A673 (cell line): ENCODE measurements at regions of chr6 and their contacts with region 1.

Region 1: GRCh38 chr6:130282234-130282995 is 59.7 kb upstream of the SAMD3 start:
- DNase-seq: peak; percentile 69
- H3K4me3 ChIP-seq: no peak overlapping the region
- H3K27ac ChIP-seq: no peak overlapping the region
- H3K4me1 ChIP-seq: peaks cover 3% of the 10 kb centered on the region
- H3K27me3 ChIP-seq: no peaks in the 10 kb centered on the region
- CTCF ChIP-seq: peak; percentile 79

Region 2: DNA sequence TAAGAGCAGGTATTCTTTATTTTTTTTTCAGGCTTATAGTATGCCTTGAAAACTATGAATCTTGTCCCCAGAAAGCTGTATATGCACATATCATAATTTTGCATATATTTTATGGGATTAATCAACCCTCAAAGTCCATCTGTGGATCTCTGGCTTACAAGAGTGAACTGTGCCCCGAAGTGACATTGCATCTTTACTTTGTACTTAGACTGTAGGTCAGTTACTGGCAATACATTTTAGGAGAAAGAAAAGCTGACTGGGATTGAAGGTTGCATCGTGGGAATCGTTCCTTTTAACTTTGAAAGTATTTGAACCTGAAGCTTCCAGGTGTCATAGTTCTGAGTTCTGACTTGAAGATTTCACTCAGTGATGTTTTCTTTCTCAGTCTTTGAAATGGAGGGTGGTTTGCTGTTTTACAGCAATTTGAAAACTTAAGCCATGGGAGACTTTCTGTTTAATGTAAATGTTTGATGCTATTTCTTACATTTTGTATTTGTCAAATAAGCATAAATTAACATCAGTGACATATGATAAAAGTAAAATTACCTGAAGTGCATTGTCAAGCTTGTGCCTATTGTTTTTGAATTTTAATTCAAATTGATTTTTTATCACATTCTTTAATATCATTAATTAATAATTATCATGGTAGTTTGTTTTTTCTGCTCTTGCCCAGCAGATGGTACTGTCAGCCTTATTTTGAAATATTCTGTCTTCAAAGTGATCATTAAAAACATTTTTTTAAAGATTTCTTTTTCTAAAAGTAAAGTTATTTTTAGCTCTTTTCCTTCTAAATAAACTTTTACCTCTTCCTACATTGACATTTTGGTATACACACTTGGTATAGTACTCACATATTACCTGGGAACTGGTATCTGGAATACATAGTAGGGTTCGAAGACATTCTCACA is 235.1 kb before region 1 on chr6:
- CTCF ChIA-PET with region 1: no interaction called
- POLR2A ChIA-PET with region 1: no interaction called
- intact Hi-C with region 1: loop called (anchors 10 kb)
- DNase-seq: no peak
- H3K4me3 ChIP-seq: no peak overlapping the region
- H3K27ac ChIP-seq: no peak overlapping the region
- H3K4me1 ChIP-seq: no peaks in the 10 kb centered on the region
- H3K27me3 ChIP-seq: no peaks in the 10 kb centered on the region
- CTCF ChIP-seq: peak; percentile 41; the same call in 1 of the 2 replicates

Region 3: DNA sequence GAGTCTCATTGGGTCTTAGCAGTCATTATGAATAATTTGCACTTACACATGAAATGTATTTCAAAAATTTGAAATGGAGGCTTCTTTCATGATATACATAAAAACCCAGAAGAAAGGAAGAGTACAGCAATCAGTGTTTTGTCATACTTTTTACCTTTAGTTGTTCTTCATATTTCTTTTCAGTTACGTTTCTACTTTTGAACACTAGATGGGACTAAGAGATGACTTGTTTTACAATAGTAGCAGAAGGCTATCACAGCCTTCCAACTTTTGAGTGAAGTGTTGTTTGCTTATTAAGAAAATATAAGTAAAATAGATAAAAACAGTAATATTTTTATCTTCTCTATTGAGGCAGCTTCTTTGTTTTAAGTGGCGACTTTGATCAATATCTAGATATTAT is 205.9 kb before region 1 on chr6:
- CTCF ChIA-PET with region 1: no interaction called
- POLR2A ChIA-PET with region 1: no interaction called
- intact Hi-C with region 1: loop called (anchors 10 kb)
- DNase-seq: no peak
- H3K4me3 ChIP-seq: no peak overlapping the region
- H3K27ac ChIP-seq: no peak overlapping the region
- H3K4me1 ChIP-seq: no peaks in the 10 kb centered on the region
- H3K27me3 ChIP-seq: no peaks in the 10 kb centered on the region
- CTCF ChIP-seq: peak; percentile 46

Region 4: GRCh38 chr6:130259557-130259956 is 22.9 kb before region 1 on chr6:
- CTCF ChIA-PET with region 1: no interaction called
- POLR2A ChIA-PET with region 1: no interaction called
- intact Hi-C with region 1: no loop called
- DNase-seq: no peak
- H3K4me3 ChIP-seq: no peak overlapping the region
- H3K27ac ChIP-seq: no peak overlapping the region
- H3K4me1 ChIP-seq: no peaks in the 10 kb centered on the region
- H3K27me3 ChIP-seq: peaks cover 3% of the 10 kb centered on the region
- CTCF ChIP-seq: no peak

Region 5: DNA sequence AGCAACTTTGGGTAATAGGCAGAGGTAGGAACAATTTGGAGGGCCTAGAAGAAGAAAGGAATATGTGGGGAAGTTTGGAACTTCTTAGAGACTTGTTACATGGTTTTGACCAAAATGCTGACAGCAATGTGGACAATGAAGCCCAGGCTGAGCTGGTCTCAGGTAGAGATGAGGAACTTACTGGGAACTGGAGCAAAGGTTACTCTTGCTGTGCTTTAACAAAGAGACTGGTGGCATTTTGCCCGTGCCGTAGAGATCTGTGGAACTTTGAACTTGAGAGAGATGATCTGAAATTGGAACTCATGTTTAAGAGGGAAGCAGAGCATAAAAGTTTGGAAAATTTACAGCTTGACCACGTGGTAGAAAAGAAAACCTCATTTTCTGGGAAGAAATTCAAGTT is 55.1 kb after region 1 on chr6:
- CTCF ChIA-PET with region 1: no interaction called
- POLR2A ChIA-PET with region 1: no interaction called
- intact Hi-C with region 1: no loop called
- DNase-seq: no peak
- H3K4me3 ChIP-seq: no peak overlapping the region
- H3K27ac ChIP-seq: no peak overlapping the region
- H3K4me1 ChIP-seq: no peaks in the 10 kb centered on the region
- H3K27me3 ChIP-seq: no peaks in the 10 kb centered on the region
- CTCF ChIP-seq: no peak